ENCODE measurements at regions of chr19 and their contacts with region 1.

Region 1: GRCh38 chr19:30649934-30650614 is 277.9 kb downstream of the ZNF536 start:
- DNase-seq: no peak
- H3K4me3 ChIP-seq: no peak overlapping the region
- H3K27ac ChIP-seq: no peak overlapping the region
- H3K4me1 ChIP-seq: no peaks in the 10 kb centered on the region
- H3K27me3 ChIP-seq: peaks cover 0 to 58% (median 4%) of the 10 kb centered on the region in 3 donors
- CTCF ChIP-seq: peak; percentile 28 to 69 (median 58)
- EP300 ChIP-seq: no peak
- POLR2A ChIP-seq: no peak

Region 2: DNA sequence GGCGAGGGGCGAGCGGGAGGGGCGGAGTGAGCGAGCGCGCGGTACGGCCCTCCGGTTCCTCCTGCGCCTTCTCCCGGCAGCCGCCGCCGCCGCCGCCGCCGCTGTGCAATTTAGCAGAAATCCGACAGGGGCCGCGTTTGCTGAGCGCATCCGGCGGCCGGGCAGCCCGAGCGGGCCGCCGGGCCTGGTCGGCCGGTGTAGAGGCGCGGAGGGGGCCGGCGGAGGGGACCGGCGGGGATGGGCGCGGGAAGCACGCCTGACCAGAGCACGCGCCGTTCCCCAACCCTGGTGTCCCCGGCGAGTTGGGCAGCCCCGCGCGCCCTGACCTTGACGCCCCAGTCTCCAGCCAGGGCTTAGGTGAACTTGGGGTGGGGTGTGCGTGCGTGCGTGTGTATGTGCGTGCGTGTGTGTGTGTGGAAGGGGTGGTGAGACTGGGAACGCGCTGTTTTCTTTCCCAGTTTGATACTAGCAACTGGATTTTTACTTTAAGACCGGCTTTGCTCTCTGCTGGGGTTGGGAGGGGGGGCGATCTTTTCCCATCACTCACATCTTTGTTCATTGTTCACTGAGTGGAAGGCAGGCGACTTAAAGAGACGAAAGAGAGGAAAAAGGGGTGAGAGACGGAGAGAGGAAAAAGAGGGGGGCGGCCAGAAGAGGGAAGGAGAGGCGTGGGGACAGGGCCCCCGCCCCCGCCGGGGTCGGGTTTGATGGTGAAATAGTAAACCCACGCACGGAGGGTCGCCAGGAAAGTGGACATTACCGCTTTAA is 422.2 kb before region 1 on chr19:
- intact Hi-C with region 1: loop called (anchors 5 kb)
- DNase-seq: peak; percentile 70
- H3K4me3 ChIP-seq: peak overlapping the region; percentile 28 to 65 (median 62)
- H3K27ac ChIP-seq: peak overlapping the region; percentile 52 to 70 (median 56)
- H3K4me1 ChIP-seq: peaks cover 0 to 40% (median 37%) of the 10 kb centered on the region in 4 donors
- H3K27me3 ChIP-seq: peaks cover 23 to 92% (median 56%) of the 10 kb centered on the region in 3 donors
- CTCF ChIP-seq: peak in 2 of 4 experiments; percentile 12 to 63
- EP300 ChIP-seq: no peak
- POLR2A ChIP-seq: no peak